Dendritic cell treated with granulocyte-macrophage colony-stimulating factor and Interleukin-4, amounts not matched to agents 40 ng/mL and 50 ng/mL, for 4 days (primary cell): ENCODE measurements at regions of chr13 and their contacts with region 1.

Region 1: GRCh38 chr13:45807520-45808099 is 43.9 kb downstream of the SIAH3 start:
- H3K4me3 Mint-ChIP-seq: no peak overlapping the region
- H3K27ac Mint-ChIP-seq: no peak overlapping the region
- H3K4me1 Mint-ChIP-seq: no peaks in the 10 kb centered on the region
- H3K27me3 Mint-ChIP-seq: no peaks in the 10 kb centered on the region

Region 2: GRCh38 chr13:46010148-46010547 is 202.5 kb after region 1 on chr13:
- intact Hi-C with region 1: loop called (anchors 10 kb)
- H3K4me3 Mint-ChIP-seq: no peak overlapping the region
- H3K27ac Mint-ChIP-seq: no peak overlapping the region
- H3K4me1 Mint-ChIP-seq: peaks cover 6% of the 10 kb centered on the region
- H3K27me3 Mint-ChIP-seq: no peaks in the 10 kb centered on the region

Region 3: GRCh38 chr13:46119883-46120614 is 312.4 kb after region 1 on chr13:
- intact Hi-C with region 1: loop called (anchors 5 kb)
- H3K4me3 Mint-ChIP-seq: no peak overlapping the region
- H3K27ac Mint-ChIP-seq: no peak overlapping the region
- H3K4me1 Mint-ChIP-seq: peaks cover 18% of the 10 kb centered on the region
- H3K27me3 Mint-ChIP-seq: peaks cover 2% of the 10 kb centered on the region

Region 4: GRCh38 chr13:46321494-46322225 is 514.0 kb after region 1 on chr13:
- intact Hi-C with region 1: loop called (anchors 5 kb)
- H3K4me3 Mint-ChIP-seq: no peak overlapping the region
- H3K27ac Mint-ChIP-seq: peak overlapping the region; percentile 85
- H3K4me1 Mint-ChIP-seq: peaks cover 61% of the 10 kb centered on the region
- H3K27me3 Mint-ChIP-seq: no peaks in the 10 kb centered on the region